GM10248 (cell line): ENCODE measurements at regions of chr17 and their contacts with region 1.

Region 1: DNA sequence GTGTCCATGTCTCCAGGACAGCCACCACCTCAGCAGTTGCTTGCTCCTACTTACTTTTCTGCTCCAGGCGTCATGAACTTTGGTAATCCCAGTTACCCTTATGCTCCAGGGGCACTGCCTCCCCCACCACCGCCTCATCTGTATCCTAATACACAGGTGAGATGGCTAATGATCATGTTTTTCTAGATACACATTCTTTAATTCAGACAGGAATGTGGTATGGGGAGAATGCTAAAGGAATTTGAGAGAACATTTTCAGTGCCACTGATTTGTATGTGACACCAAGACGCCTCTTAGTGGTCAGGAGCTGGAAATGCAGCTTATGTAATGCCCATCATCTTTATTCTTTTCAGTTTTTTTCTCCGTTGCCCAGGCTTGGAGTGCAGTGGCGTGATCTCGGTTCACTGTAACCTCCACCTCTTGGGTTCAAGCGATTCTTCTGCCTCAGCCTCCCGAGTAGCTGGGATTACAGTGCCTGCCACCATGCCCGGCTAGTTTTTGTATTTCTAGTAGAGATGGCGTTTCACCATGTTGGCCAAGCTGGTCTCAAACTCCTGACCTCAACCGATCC is 8.9 kb upstream of the RAPGEFL1 start:
- DNase-seq: peak; percentile 71
- CTCF ChIP-seq: peak; percentile 75

Region 2: DNA sequence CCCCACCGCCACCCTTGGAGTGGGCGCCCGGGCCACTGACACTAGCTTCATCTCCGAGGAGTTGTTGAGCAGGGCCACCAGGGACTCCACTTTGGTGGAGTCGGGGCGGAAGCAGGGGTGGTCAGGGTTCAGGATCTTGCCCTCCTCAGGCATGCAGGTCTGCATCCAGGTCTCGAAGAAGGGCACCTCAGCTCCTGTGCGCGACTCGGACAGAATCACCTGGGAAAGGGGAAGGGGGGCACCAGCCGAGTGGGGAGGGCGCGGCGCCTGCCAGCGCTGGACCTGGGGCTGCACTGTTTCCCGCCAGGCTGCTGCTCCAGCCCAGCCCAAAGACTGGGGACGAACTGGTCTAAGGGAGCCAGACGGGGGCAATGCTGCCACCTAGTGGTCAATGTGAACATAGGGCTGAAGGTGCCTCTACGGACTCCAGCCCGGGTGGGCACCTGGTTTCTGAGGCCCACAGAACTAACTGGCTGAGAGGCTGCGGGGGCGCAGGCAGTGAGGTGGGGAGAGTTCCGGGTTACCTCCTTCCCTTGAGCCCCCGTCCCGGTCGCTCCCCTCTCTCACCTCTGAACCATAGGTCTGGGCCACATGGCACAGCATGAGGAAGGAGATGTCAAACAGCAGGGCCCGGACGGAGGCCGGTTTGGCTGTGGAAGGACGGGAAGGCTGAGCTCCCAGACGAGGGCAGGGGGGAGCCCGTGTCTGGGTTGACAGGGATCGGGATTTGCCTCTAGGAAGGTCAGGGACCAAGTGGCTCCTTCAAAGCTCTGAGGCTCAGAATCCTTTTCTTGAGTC is 141.3 kb before region 1 on chr17:
- CTCF ChIA-PET with region 1: interaction called, 11 read pairs
- POLR2A ChIA-PET with region 1: no interaction called
- DNase-seq: peak; percentile 92
- CTCF ChIP-seq: peak; percentile 84

Region 3: GRCh38 chr17:40121181-40122135 is 46.9 kb before region 1 on chr17 and contains the start of gene MSL1:
- CTCF ChIA-PET with region 1: interaction called, 118 read pairs
- POLR2A ChIA-PET with region 1: no interaction called
- DNase-seq: peak; percentile 94
- CTCF ChIP-seq: no peak

Region 4: GRCh38 chr17:40157973-40158372 is 10.4 kb before region 1 on chr17:
- CTCF ChIA-PET with region 1: interaction called, 117 read pairs
- POLR2A ChIA-PET with region 1: no interaction called
- DNase-seq: no peak
- CTCF ChIP-seq: no peak

Region 5: DNA sequence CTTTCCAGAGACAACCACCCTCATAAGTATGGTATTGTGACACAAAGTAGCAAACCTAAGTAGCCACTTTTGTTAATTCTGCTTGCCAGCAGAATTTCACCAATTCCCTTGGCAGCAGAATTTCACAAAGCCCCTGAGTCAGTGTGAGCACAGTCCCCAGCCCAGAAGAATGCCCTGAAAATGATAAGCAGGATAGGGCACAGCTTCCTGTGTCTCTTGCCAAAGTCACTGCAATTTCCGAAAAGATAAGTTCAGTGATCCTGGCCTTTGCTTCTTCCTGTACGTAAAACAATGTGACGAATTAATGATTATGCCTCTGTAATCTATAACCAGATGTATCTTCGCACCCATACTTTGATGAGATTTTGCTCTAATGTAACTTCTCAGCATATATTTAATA is 34.8 kb after region 1 on chr17:
- CTCF ChIA-PET with region 1: interaction called, 12 read pairs
- POLR2A ChIA-PET with region 1: no interaction called
- DNase-seq: no peak
- CTCF ChIP-seq: no peak

Region 6: DNA sequence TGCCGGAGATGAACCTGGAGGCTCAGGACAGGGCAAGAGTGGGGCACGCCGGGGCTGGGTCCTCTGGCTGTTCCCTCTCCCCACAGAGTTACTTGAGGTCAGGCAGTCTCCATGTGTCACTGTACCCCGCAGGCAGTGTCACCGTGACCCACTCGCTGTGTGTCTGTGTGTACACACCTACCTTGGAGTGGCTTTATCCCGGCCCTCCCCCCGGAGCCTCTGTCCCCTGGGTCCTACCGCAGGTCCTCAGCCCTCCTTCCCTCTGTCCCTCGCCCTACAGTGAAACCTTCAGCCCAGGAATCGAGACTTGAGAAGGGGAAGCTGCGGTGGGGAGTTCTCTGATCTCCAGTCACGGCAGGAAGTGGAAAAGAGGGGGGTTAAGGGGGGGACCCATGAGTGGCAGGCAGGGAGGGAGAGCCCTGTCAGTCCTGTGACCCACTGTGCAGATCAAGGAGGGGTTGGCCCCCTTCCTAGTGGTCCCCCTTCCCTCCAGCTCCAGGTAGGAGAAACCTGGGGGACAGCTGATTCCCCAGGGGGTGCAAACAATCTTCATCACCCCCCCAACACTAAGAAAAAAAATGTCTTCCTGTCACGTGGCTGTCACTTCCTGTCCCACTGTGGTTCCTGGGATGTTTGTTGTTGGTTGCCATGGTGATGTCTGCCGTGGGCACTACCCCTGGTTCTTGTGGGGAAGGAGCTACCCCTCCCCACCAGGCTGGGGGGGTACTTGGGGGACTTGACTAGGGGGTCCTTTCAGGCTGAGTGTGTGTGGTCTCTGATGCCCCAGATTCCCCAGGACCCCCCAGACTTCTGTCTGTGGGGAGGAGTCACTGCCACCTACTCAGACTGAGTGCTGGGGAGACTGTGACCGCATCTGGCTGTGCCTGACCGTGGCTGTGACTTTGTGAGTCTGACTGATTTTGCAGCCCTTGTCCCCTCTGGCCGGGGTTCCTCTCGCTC is 154.3 kb after region 1 on chr17:
- CTCF ChIA-PET with region 1: no interaction called
- POLR2A ChIA-PET with region 1: no interaction called
- DNase-seq: peak; percentile 88
- CTCF ChIP-seq: no peak